Activated CD4-positive, alpha-beta T cell treated with anti-CD3 and anti-CD28 coated beads for 36 hours (primary cell): ENCODE measurements at regions of chr9 and their contacts with region 1.

Region 1: DNA sequence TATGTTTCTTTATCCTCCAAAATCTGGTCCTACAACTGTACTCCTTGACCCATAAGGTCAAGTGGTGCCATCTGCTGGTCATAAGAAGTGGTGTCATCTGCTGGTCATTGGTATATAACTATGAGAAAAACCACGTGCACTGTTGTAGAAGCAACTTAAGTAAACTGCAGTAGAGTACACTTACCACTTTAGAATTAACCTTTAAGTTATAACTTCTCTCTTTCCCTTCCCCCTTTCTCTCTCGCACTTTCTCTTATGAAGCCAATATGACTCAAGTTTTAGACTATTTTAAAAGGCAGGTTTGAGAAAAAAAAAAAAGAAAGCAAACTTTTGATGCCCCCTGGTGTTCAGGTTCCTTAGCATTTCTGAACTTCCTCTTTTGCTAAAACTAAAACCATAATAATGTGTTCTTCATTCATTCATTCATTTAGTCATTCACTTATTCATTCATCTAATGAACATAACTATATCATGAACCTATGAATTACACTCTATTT is 12.8 kb upstream of the MTAP start:
- DNase-seq: peak; percentile 67
- ATAC-seq: peak; percentile 99
- H3K4me3 Mint-ChIP-seq: peak overlapping the region; percentile 60
- H3K27ac Mint-ChIP-seq: peak overlapping the region; percentile 77
- H3K4me1 Mint-ChIP-seq: peaks cover 5% of the 10 kb centered on the region
- H3K27me3 Mint-ChIP-seq: peaks cover 9% of the 10 kb centered on the region

Region 2: DNA sequence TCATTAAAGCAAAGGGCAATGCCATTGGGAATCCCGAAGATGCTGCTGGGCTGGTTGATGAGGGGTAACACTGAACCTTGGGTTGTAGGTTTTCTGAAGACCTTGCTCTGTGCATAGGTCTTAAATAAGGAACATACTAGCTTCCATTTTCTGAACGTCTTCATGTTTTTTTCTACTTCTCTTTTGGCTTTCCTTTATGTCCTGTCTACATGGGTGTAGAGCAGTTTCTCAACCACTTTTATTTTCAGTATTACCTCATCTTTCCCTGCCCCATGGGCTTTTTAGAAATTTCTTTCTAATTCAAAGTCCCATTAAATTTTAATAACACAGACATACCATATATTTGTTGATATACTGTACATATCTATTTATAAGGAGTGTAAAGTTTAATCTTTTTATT is 549.7 kb before region 1 on chr9 and contains the start of gene IFNA14:
- CTCF ChIA-PET with region 1: no interaction called
- POLR2A ChIA-PET with region 1: no interaction called
- intact Hi-C with region 1: loop called (anchors 1 to 5 kb)
- DNase-seq: no peak
- ATAC-seq: no peak
- H3K4me3 Mint-ChIP-seq: no peak within 1 kb of the TSS
- H3K27ac Mint-ChIP-seq: no peak within 1 kb of the TSS
- H3K4me1 Mint-ChIP-seq: peaks cover 10% of the 10 kb centered on the region
- H3K27me3 Mint-ChIP-seq: peaks cover 7% of the 10 kb centered on the region
- total RNA-seq, gene IFNA14: not detected

Region 3: DNA sequence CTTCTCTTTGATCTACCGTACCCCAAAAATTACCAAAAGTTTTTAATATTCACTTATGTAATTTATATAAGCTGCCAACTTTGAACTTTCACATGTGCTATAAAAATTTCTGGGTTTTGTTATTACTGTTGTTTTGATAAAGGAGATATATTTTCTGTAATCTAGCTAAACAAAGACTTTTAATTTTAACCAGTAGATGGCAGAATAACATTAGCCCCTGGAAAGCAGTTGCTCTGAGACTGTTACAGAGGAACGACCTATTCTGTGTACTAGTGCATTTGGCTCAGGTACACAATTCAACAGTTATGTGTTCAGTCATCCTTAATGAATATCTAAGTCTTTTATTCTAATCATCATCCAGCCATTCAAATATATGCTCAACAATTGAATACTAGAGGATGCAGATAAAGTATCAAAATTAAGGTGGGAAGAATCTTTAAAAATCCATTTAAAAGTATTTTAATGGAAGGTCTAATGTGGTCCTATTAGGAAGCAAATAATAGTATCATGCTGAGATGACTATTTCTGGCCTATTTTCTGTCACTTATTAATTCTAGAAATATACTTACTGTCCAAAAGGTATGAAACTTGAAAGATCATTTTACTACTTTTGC is 463.0 kb before region 1 on chr9:
- CTCF ChIA-PET with region 1: interaction called, 8 read pairs
- POLR2A ChIA-PET with region 1: no interaction called
- intact Hi-C with region 1: loop called (anchors 2 kb)
- DNase-seq: no peak
- ATAC-seq: peak; percentile 84
- H3K4me3 Mint-ChIP-seq: no peak overlapping the region
- H3K27ac Mint-ChIP-seq: no peak overlapping the region
- H3K4me1 Mint-ChIP-seq: peaks cover 44% of the 10 kb centered on the region
- H3K27me3 Mint-ChIP-seq: no peaks in the 10 kb centered on the region

Region 4: GRCh38 chr9:21465859-21466518 is 323.6 kb before region 1 on chr9:
- CTCF ChIA-PET with region 1: interaction called, 28 read pairs
- POLR2A ChIA-PET with region 1: no interaction called
- intact Hi-C with region 1: loop called (anchors 1 kb)
- DNase-seq: no peak
- ATAC-seq: peak; percentile 78
- H3K4me3 Mint-ChIP-seq: no peak overlapping the region
- H3K27ac Mint-ChIP-seq: no peak overlapping the region
- H3K4me1 Mint-ChIP-seq: no peaks in the 10 kb centered on the region
- H3K27me3 Mint-ChIP-seq: peaks cover 2% of the 10 kb centered on the region

Region 5: DNA sequence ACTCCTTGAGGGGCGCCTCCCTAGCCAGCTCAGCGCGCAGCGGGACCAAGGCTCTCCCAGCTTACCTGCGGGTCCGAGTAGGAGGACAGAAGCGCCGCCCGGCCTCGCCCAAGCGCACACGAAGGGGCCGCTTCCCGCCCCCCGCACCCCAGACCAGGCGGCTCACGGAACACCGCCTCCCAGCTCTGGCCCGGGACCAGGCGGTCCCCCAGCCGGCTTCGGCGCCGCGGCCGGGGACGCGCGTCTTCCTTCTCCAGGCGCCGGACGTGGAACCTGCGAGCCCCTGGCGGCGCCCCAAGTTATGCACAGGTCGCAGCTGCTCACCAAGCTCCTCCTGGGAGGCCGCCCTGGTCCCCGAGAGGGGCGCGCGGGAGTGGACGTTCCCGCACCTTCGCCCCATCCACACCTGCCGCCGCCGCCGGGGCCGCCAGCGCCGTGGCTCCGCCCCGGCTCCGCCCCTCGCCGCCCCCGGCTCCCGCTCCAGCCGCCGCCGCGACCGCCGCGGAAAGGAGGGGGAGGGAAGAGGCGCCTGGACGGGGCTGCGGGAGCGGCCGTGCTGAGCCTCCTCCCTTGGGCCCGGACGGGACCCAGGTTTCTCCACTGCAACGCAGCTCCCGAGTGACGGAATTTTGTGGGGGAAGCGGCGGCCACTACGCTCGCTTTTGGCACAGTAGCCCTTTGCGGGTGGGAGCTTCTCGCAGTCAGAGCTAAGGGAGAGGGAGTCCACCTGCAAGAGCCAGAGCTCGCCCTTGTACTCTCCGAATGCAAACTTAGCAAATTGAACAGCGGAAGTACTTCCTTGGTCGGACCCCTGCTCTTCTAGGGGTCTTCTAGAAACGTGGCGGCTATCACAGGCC is 229.9 kb before region 1 on chr9:
- CTCF ChIA-PET with region 1: interaction called, 6 read pairs
- POLR2A ChIA-PET with region 1: no interaction called
- intact Hi-C with region 1: loop called (anchors 2 to 10 kb)
- DNase-seq: peak; percentile 69
- ATAC-seq: peak; percentile 88
- H3K4me3 Mint-ChIP-seq: peak overlapping the region; percentile 86
- H3K27ac Mint-ChIP-seq: no peak overlapping the region
- H3K4me1 Mint-ChIP-seq: peaks cover 33% of the 10 kb centered on the region
- H3K27me3 Mint-ChIP-seq: peaks cover 30% of the 10 kb centered on the region

Region 6: DNA sequence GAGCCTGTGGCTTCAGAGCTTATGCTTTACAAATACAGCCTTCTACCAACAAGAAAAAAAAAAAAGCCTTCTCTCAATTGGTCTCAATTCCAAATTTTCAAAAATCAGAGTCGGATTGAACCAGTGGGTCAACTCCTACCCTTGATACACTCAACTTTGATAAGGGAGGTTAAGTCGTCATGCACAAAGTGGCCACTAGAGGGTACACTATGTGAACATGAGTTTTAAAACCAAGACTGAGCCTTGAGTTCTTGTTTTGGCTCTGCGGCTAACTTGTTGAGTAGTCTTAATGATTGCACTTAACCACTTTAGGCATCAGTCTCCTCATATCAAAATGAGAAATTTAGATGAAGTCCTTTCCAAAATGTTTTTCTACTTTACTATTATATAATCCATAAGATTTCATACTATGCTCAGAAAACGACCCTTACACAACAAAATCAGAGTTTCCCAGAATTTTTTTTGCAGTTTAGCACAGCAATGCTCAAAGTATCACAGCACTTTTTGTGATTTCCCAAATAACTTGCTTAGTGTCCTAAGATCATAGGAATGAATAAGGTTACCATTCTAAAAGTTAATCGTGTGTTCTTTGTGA is 80.0 kb before region 1 on chr9:
- CTCF ChIA-PET with region 1: interaction called, 40 read pairs
- POLR2A ChIA-PET with region 1: no interaction called
- intact Hi-C with region 1: loop called (anchors 1 kb)
- DNase-seq: peak; percentile 79
- ATAC-seq: peak; percentile 53
- H3K4me3 Mint-ChIP-seq: no peak overlapping the region
- H3K27ac Mint-ChIP-seq: no peak overlapping the region
- H3K4me1 Mint-ChIP-seq: peaks cover 19% of the 10 kb centered on the region
- H3K27me3 Mint-ChIP-seq: peaks cover 2% of the 10 kb centered on the region

Region 7: DNA sequence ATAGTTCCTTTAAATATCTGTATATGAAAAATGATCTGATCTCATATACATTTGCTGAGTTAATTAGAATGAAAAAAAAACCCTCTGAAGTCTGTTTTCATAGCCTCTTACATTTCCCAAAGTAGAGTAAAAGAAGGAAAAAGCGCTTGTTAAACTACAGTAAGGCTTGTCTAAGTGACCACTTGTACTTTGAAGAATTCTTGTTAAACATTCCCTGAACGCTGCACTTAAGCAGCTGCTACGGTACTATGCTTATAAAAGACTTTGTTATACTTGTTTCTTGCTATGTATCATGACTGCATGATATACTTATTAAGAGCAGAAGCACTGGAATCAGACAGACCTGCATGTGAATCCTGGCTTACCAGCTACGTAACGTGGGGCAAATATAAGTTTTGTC is 68.8 kb before region 1 on chr9:
- CTCF ChIA-PET with region 1: no interaction called
- POLR2A ChIA-PET with region 1: no interaction called
- intact Hi-C with region 1: no loop called
- DNase-seq: no peak
- ATAC-seq: no peak
- H3K4me3 Mint-ChIP-seq: no peak overlapping the region
- H3K27ac Mint-ChIP-seq: no peak overlapping the region
- H3K4me1 Mint-ChIP-seq: no peaks in the 10 kb centered on the region
- H3K27me3 Mint-ChIP-seq: peaks cover 15% of the 10 kb centered on the region

Region 8: GRCh38 chr9:21871256-21871975 is 81.8 kb after region 1 on chr9:
- CTCF ChIA-PET with region 1: no interaction called
- POLR2A ChIA-PET with region 1: no interaction called
- intact Hi-C with region 1: no loop called
- DNase-seq: no peak
- ATAC-seq: no peak
- H3K4me3 Mint-ChIP-seq: no peak overlapping the region
- H3K27ac Mint-ChIP-seq: no peak overlapping the region
- H3K4me1 Mint-ChIP-seq: peaks cover 2% of the 10 kb centered on the region
- H3K27me3 Mint-ChIP-seq: no peaks in the 10 kb centered on the region